ENCODE measurements at regions of chr3 and their contacts with region 1.

Region 1: DNA sequence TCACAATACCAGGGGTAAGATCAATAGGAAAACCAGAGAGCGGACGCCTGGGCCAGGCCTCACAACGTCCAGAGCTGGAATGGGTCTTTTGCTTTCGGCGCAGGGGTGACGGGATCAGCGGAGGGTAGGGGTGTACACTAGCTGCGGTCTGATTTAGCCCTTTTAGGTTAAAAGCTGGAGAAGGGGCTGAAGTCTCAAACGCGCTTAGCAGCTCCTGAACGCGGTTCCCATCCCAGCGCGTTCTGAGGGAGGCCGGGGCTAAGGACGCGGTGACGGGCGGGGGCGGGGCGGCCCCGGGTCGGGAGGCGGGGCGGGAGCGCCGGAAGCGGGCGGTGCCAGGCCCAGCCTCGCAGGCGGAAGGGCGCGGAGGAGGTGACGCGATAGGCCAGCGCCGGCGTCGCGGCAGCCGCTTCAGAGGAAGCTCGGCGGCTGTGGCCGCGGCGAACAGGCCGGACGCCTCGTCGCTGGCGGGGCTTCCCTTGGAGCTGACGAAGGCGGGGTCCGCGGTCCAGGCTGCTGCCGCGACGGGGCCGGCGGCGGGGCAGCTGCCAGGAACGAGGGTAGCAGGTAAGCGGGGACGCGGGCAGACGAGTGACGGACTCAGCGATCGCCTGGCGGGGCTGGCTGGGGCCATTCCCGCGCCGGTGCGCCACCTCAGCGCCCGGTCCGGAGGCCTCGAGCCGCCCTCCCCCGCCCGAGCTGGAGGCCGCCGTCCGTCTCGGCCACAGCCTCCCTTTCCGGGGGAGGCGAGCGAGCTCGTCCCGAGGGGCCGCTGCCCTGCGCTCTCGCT is at the start of gene SENP5:
- DNase-seq: peak; percentile 79 to 87
- ATAC-seq: peak; percentile 94 to 95
- H3K4me3 ChIP-seq: peak within 1 kb of the TSS; percentile 87 to 92 (median 90)
- H3K27ac ChIP-seq: peak within 1 kb of the TSS; percentile 81 to 96 (median 92)
- H3K4me1 ChIP-seq: peaks cover 32 to 44% of the 10 kb centered on the region in 2 donors
- H3K27me3 ChIP-seq: no peaks in the 10 kb centered on the region
- CTCF ChIP-seq: no peak
- POLR2A ChIP-seq: peak; percentile 89 to 96
- total RNA-seq, gene SENP5: 21.4 to 42.7 (median 31.7) TPM

Region 2: DNA sequence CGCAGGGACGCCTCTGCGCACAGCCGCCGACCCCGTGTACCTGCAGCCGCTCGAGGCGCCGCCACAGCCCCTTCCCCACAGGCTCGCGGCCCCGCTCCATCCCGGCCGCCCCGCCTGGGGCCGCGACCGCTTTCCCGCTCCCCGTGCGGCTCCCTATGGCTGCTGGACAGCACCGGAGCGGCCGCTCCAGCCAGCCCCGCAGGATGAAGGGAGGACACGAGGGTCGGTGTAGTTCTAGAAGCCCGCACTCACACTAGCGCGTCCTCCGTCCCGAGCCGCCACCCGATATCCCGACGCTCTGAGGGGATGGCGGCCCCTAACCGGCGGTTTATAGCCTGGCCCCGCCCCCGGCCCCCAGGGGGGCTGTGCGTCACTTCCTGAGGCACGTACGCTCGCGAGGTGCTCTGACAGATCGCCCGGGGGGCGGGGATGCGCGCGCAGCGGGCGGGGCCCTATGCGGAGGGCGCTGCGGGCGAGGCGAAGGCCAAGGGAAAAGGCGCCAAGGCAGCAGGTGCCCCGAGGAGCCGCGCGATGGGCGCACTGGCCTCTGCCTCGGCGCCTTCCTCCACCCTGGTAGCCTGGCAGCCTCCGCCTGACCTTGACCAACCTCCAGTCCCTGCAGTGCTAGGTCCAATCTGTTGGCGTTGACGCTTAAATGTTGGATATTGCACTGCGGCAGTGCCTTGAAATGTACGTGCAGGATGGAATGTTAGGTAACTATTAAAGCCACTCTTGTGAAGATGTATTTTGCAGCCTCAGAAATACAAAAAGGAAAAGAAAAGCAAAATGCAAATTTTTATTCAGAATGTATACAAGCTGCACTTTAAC is 785.7 kb before region 1 on chr3 and contains the start of gene TFRC:
- in situ Hi-C with region 1: no loop called
- intact Hi-C with region 1: loop called (anchors 5 kb)
- DNase-seq: peak; percentile 90 to 98
- ATAC-seq: peak; percentile 86 to 95
- H3K4me3 ChIP-seq: peak within 1 kb of the TSS; percentile 70 to 98 (median 92)
- H3K27ac ChIP-seq: peak within 1 kb of the TSS; percentile 89 to 100 (median 98)
- H3K4me1 ChIP-seq: peaks cover 31 to 40% of the 10 kb centered on the region in 2 donors
- H3K27me3 ChIP-seq: no peaks in the 10 kb centered on the region
- CTCF ChIP-seq: no peak
- POLR2A ChIP-seq: peak; percentile 98 to 99
- total RNA-seq, gene TFRC: 23.1 to 162 (median 56.3) TPM

Region 3: DNA sequence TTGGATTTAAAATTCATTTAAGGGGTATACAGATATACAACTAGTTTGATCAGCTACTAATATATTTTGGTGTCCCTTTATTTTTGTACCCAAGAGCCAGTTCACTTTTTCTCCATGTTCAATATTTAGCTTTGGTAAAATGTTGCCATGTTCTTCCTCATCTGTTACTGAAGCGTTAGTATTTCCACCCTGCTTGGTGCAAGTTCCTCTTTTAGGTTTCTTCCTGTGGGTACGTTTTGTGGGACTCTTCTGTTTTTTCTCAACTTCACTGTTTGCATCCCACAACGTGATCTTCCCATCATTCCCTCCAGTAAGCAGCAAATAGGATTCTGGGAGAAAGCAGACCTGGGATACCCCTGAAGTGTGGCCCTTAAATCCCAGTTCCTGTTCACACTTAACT is 313.5 kb before region 1 on chr3:
- in situ Hi-C with region 1: no loop called
- intact Hi-C with region 1: loop called (anchors 10 kb)
- DNase-seq: no peak
- ATAC-seq: no peak
- H3K4me3 ChIP-seq: no peak overlapping the region
- H3K27ac ChIP-seq: peak overlapping the region; percentile 75 to 86 (median 81)
- H3K4me1 ChIP-seq: peaks cover 17% of the 10 kb centered on the region in 2 donors
- H3K27me3 ChIP-seq: no peaks in the 10 kb centered on the region
- CTCF ChIP-seq: no peak
- POLR2A ChIP-seq: no peak

Region 4: DNA sequence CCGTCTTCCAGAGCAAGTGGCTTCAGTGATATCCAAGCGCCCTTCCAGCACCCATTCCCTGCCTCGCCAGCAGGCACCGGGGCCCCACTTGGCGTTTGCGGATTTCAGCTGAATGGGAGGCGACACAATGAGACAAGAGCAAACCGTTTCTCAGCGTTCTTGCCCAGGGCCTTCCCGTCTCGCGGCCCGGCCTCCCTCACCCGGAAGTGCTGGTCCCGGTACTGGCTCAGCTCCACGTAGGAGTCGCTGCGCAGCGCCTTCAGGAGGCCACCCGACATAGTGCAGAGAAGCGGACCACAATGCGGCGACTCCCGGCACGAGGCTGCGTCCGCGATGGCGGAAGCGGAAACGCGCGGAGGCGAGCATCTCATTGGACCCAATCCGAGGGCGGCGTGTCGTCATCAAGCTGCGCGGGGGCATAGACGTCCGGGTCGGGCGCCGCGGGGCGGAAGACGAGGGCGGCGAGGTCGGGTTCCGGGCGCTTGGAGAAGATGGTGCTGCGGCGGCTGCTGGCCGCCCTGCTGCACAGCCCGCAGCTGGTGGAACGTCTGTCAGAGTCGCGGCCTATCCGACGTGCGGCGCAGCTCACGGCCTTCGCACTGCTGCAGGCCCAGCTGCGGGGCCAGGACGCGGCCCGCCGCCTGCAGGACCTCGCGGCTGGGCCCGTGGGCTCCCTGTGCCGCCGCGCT is 74.7 kb after region 1 on chr3 and contains the start of gene NCBP2:
- in situ Hi-C with region 1: no loop called
- intact Hi-C with region 1: loop called (anchors 1 kb)
- DNase-seq: peak; percentile 96 to 98
- ATAC-seq: peak; percentile 94 to 97
- H3K4me3 ChIP-seq: peak within 1 kb of the TSS; percentile 93 to 99 (median 98)
- H3K27ac ChIP-seq: peak within 1 kb of the TSS; percentile 88 to 93 (median 92)
- H3K4me1 ChIP-seq: peaks cover 27 to 36% of the 10 kb centered on the region in 2 donors
- H3K27me3 ChIP-seq: no peaks in the 10 kb centered on the region
- CTCF ChIP-seq: peak; percentile 56 to 77 (median 64)
- POLR2A ChIP-seq: peak; percentile 83 to 90
- total RNA-seq, gene NCBP2: 23.4 to 29.9 (median 27.5) TPM

Region 5: DNA sequence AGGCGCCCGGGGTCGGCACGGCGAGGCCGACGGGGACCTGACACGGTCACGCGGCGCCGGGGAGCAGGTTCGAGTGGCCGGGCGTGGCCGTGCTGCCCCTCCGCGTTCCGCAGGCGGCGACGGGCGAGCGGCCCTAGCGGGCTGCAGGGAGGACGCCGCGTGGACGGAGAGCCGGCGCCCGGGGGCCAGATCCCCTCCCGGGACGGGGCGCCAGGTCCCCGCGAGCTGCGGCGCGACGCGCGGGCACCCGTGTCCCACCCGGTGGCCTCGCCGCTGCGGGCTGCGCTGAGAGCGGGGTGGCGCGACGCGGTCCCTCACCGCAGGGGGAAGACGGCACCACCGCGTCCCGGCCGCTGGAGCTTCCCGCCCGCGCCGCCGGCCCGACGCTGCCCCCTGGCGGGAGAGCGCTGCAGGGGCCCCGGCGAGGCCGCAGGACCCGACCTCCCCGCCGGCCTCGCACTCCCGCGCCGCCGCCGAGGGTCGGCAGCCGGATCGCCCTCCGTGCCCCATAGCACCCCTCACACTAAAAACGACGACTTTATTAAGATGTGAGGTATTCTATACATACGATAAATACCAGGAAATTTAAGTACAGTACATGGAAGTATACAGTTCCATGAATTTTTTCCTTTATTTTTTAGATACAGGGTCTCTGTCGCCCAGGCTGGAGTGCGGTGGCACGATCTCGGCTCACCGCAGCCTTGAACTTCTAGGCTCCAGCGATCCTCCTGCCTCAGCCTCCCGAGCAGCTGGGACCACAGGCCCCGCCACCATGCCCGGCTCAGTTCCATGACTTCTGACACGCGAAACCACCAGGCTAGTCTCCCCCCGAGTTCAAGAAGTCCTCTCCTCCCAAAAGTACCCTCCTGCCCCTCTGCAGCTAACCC is 102.2 kb after region 1 on chr3:
- in situ Hi-C with region 1: loop called in 1 of 4 experiments (anchors 25 kb)
- intact Hi-C with region 1: no loop called
- DNase-seq: peak in 1 of 2 donors; percentile 38
- ATAC-seq: peak; percentile 72 to 84
- H3K4me3 ChIP-seq: peak overlapping the region; percentile 78 to 97 (median 88)
- H3K27ac ChIP-seq: peak overlapping the region; percentile 31 to 77 (median 76)
- H3K4me1 ChIP-seq: peaks cover 0 to 9% of the 10 kb centered on the region in 2 donors
- H3K27me3 ChIP-seq: no peaks in the 10 kb centered on the region
- CTCF ChIP-seq: peak; percentile 67 to 98 (median 92)
- POLR2A ChIP-seq: no peak

Measured in gastrocnemius medialis (tissue), 4 donors.